OCI-LY7 (cell line): ENCODE measurements at regions of chr14 and their contacts with region 1.

Region 1: DNA sequence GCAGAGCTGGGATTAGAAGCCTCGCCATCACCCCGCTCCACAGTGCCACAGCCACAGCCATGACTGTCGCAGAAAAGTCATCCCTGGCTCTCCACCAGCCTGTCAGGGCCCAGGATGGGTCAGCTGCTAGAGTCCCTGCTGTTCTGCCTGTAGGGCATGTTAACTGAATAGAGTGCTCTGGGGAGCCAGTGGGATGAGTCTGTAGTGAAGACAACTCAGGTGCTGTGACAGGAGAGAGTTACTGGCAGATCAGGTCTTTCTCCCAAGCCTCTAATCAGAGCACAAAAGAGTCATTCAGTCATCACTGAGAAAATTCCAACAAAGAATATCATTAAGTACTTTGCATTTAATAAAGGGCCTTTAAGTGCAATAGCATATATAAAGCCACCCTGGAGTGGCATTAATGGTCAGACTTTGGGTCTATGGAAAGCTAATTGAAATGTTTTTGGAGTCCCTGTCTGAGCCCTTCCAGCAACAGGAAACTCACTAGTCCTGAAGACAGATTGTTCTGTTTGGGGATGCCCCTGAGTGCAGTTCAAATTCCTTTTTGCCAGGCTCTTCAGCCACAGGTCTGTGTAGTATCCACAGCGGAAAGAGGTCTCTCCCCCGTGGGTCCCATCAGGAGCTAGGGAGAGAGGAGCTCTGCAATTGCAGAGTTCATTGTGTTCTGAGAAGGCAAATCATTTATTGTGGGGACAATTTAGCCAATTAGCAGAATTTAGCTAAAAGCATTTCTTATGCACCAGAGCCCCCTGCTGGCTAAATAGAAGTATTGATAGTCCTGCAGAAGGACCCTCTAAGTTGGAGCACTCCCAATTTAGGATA is 45.2 kb upstream of the C14orf132 start:
- DNase-seq: peak; percentile 80
- H3K4me3 ChIP-seq: no peak overlapping the region
- H3K27ac ChIP-seq: no peak overlapping the region
- H3K4me1 ChIP-seq: no peaks in the 10 kb centered on the region
- CTCF ChIP-seq: peak; percentile 97

Region 2: GRCh38 chr14:95425369-95426115 is 568.4 kb before region 1 on chr14:
- CTCF ChIA-PET with region 1: no interaction called
- POLR2A ChIA-PET with region 1: no interaction called
- intact Hi-C with region 1: loop called (anchors 5 kb)
- DNase-seq: no peak
- H3K4me3 ChIP-seq: no peak overlapping the region
- H3K27ac ChIP-seq: no peak overlapping the region
- H3K4me1 ChIP-seq: peaks cover 3% of the 10 kb centered on the region
- CTCF ChIP-seq: no peak

Region 3: GRCh38 chr14:95609387-95609990 is 384.5 kb before region 1 on chr14:
- CTCF ChIA-PET with region 1: no interaction called
- POLR2A ChIA-PET with region 1: interaction called, 4 read pairs
- intact Hi-C with region 1: loop called (anchors 1 kb)
- DNase-seq: peak; percentile 81
- H3K4me3 ChIP-seq: no peak overlapping the region
- H3K27ac ChIP-seq: no peak overlapping the region
- H3K4me1 ChIP-seq: peaks cover 26% of the 10 kb centered on the region
- CTCF ChIP-seq: peak; percentile 97

Region 4: DNA sequence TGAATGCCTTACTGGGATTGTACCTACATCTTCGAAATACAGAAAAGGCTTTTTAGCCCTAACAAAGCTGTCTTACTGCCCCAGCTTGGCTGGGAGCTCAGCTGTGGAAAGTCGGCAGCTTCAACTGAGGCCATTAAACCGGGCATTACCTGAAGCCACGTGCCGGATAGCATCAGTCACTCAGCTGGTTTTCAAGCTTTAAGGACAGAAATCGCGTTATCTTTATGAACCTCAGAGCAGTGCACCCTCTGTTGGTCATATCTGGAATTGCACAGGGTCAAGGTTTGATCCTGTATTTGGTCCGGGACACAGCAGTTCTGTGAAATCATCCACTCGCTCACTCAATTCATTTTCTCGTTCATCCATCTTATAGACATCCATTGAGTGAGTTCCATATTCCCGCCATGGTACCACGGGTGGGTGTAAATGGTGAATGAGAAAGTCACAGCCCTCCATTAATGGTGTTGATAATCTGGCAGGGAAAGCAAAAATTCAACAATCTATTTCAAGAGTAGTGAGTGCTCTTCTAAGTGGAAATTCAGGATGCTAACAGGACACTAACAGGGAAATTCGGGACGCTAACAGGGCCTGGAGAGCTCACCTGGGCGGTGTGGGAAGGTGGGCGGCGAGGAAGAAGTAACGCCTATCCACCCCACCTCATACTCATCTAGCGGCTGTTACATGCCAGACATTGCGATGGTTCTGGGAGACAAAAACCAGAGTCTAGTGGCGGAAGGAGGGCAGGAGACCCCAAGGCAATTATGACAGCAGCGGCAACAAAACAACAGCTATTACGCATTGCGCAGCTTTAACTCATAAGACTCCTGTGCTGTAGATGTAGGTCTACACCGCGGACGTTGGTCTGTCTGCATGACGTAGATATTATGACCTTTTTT is 219.5 kb before region 1 on chr14:
- CTCF ChIA-PET with region 1: no interaction called
- POLR2A ChIA-PET with region 1: no interaction called
- intact Hi-C with region 1: loop called (anchors 5 kb)
- DNase-seq: peak; percentile 86
- H3K4me3 ChIP-seq: no peak overlapping the region
- H3K27ac ChIP-seq: no peak overlapping the region
- H3K4me1 ChIP-seq: peaks cover 6% of the 10 kb centered on the region
- CTCF ChIP-seq: peak; percentile 98

Region 5: GRCh38 chr14:96275177-96276112 is 281.5 kb after region 1 on chr14:
- CTCF ChIA-PET with region 1: no interaction called
- POLR2A ChIA-PET with region 1: no interaction called
- intact Hi-C with region 1: loop called (anchors 5 kb)
- DNase-seq: peak; percentile 61
- H3K4me3 ChIP-seq: no peak overlapping the region
- H3K27ac ChIP-seq: no peak overlapping the region
- H3K4me1 ChIP-seq: no peaks in the 10 kb centered on the region
- CTCF ChIP-seq: peak; percentile 95